Mammary epithelial cell (primary cell): ENCODE measurements at regions of chr6 and their contacts with region 1.

Region 1: GRCh38 chr6:21935561-21936028 is 342.0 kb downstream of the SOX4 start:
- DNase-seq: peak; percentile 51
- H3K4me3 ChIP-seq: no peak overlapping the region
- H3K27ac ChIP-seq: no peak overlapping the region
- H3K4me1 ChIP-seq: no peaks in the 10 kb centered on the region
- H3K27me3 ChIP-seq: no peaks in the 10 kb centered on the region
- CTCF ChIP-seq: peak; percentile 55 to 59

Region 2: DNA sequence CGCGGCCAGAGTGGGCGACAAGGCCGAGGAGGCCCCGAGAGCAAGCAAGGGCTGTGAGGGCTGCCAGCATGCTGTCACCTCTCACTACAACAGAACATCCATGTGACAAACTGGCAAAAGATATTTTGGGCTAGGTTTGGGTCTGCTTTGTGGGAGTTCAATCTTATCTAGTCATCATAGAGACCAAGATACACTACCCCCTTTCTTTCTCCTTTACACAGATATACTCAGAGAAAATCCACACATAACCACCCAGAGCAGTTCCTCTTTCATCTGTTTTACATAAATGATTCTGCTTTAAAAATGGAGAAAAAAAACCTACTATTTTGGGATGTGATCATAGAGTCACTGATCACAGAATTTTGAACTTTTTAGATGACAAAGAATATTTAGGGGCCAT is 325.3 kb before region 1 on chr6:
- CTCF ChIA-PET with region 1: no interaction called
- dilution Hi-C with region 1: no loop called
- in situ Hi-C with region 1: loop called in 1 of 2 experiments (anchors 25 kb)
- intact Hi-C with region 1: no loop called
- DNase-seq: no peak
- H3K4me3 ChIP-seq: no peak overlapping the region
- H3K27ac ChIP-seq: no peak overlapping the region
- H3K4me1 ChIP-seq: no peaks in the 10 kb centered on the region
- H3K27me3 ChIP-seq: no peaks in the 10 kb centered on the region
- CTCF ChIP-seq: no peak

Region 3: GRCh38 chr6:21664314-21665109 is 271.1 kb before region 1 on chr6:
- CTCF ChIA-PET with region 1: no interaction called
- dilution Hi-C with region 1: no loop called
- in situ Hi-C with region 1: no loop called
- intact Hi-C with region 1: loop called (anchors 10 kb)
- DNase-seq: peak; percentile 14
- H3K4me3 ChIP-seq: peak overlapping the region; percentile 48 to 59 (median 53)
- H3K27ac ChIP-seq: no peak overlapping the region
- H3K4me1 ChIP-seq: peaks cover 19% of the 10 kb centered on the region
- H3K27me3 ChIP-seq: peaks cover 22% of the 10 kb centered on the region
- CTCF ChIP-seq: no peak

Region 4: DNA sequence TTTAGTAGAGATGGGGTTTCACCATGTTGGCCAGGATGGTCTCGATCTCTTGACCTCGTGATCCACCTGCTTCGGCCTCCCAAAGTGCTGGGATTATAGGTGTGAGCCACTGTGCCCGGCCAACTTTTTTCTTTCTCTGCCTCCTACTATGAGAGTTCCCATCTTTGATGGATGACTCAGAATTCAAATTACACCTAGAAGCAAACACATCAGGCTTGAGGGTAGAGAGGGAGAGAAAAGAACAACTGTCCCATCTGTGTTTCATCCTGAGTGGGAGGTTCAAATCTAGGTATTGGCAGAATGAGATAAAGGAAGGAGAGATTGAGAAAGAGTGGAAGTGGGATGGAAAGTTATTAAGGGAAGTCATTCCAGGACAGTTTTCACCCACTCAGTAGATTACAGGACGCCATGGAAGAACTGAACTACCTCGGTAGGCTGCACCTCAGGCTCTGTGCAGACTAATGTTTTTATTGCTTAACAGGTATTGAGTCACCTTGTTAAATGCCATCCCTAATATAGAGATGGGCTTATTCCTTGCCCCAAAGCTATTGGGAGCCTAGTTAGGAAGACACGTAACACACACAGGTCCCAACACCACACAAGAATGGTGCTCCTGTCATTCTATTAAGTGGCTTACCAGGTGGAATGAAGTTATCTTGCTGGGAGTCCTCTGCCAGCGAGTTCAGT is 66.4 kb before region 1 on chr6:
- CTCF ChIA-PET with region 1: no interaction called
- dilution Hi-C with region 1: no loop called
- in situ Hi-C with region 1: no loop called
- intact Hi-C with region 1: loop called (anchors 5 kb)
- DNase-seq: peak; percentile 97
- H3K4me3 ChIP-seq: no peak overlapping the region
- H3K27ac ChIP-seq: peak overlapping the region; percentile 62
- H3K4me1 ChIP-seq: peaks cover 28% of the 10 kb centered on the region
- H3K27me3 ChIP-seq: no peaks in the 10 kb centered on the region
- CTCF ChIP-seq: no peak

Region 5: GRCh38 chr6:21887231-21888185 is 48.1 kb before region 1 on chr6:
- CTCF ChIA-PET with region 1: no interaction called
- dilution Hi-C with region 1: no loop called
- in situ Hi-C with region 1: no loop called
- intact Hi-C with region 1: no loop called
- DNase-seq: no peak
- H3K4me3 ChIP-seq: no peak overlapping the region
- H3K27ac ChIP-seq: no peak overlapping the region
- H3K4me1 ChIP-seq: peaks cover 22% of the 10 kb centered on the region
- H3K27me3 ChIP-seq: no peaks in the 10 kb centered on the region
- CTCF ChIP-seq: no peak